Activated CD8-positive, alpha-beta T cell treated with anti-CD3 and anti-CD28 coated beads for 36 hours (primary cell): ENCODE measurements at regions of chr3 and their contacts with region 1.

Region 1: DNA sequence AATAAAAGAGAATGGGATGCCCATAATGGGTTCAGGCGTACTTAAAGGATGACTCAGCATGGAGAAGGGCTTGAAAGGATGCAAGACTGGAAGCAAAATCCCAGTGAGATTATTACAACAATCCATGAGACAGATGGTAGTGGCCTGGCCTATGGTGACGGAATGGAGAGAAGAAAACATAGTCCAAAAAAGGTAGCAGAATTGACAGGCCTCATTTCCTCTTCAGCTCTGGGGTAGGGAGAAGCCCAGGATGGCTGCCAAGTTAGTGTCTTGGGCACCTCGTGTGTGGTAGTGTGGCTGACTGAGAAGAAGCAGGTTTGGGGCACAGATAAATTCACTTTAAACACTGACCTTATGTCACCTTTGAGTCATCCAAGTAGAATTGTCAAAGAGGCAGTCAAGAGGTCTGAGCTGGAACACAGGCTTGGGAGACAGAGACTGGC is 18.1 kb downstream of the MB21D2 start:
- DNase-seq: peak; percentile 30
- ATAC-seq: no peak
- H3K4me3 Mint-ChIP-seq: no peak overlapping the region
- H3K27ac Mint-ChIP-seq: peak overlapping the region; percentile 59
- H3K4me1 Mint-ChIP-seq: peaks cover 32% of the 10 kb centered on the region
- H3K27me3 Mint-ChIP-seq: peaks cover 17% of the 10 kb centered on the region
- CTCF ChIP-seq: no peak

Region 2: GRCh38 chr3:192816351-192816750 is 83.2 kb before region 1 on chr3:
- CTCF ChIA-PET with region 1: interaction called, 3 read pairs
- POLR2A ChIA-PET with region 1: interaction called, 5 read pairs
- intact Hi-C with region 1: loop called (anchors 5 kb)
- DNase-seq: no peak
- ATAC-seq: no peak
- H3K4me3 Mint-ChIP-seq: no peak overlapping the region
- H3K27ac Mint-ChIP-seq: no peak overlapping the region
- H3K4me1 Mint-ChIP-seq: peaks cover 22% of the 10 kb centered on the region
- H3K27me3 Mint-ChIP-seq: no peaks in the 10 kb centered on the region
- CTCF ChIP-seq: peak; percentile 69

Region 3: GRCh38 chr3:192917404-192918274 is 18.1 kb after region 1 on chr3 and contains the start of gene MB21D2:
- CTCF ChIA-PET with region 1: interaction called, 3 read pairs
- POLR2A ChIA-PET with region 1: interaction called, 5 read pairs
- intact Hi-C with region 1: loop called (anchors 2 kb)
- DNase-seq: peak; percentile 62
- ATAC-seq: peak; percentile 70
- H3K4me3 Mint-ChIP-seq: peak within 1 kb of the TSS; percentile 82
- H3K27ac Mint-ChIP-seq: peak within 1 kb of the TSS; percentile 83
- H3K4me1 Mint-ChIP-seq: peaks cover 19% of the 10 kb centered on the region
- H3K27me3 Mint-ChIP-seq: peaks cover 60% of the 10 kb centered on the region
- CTCF ChIP-seq: no peak
- total RNA-seq, gene MB21D2: 3.1 to 3.2 TPM

Region 4: GRCh38 chr3:193048127-193048526 is 148.6 kb after region 1 on chr3:
- CTCF ChIA-PET with region 1: no interaction called
- POLR2A ChIA-PET with region 1: no interaction called
- intact Hi-C with region 1: no loop called
- DNase-seq: no peak
- ATAC-seq: no peak
- H3K4me3 Mint-ChIP-seq: no peak overlapping the region
- H3K27ac Mint-ChIP-seq: no peak overlapping the region
- H3K4me1 Mint-ChIP-seq: no peaks in the 10 kb centered on the region
- H3K27me3 Mint-ChIP-seq: peaks cover 2% of the 10 kb centered on the region
- CTCF ChIP-seq: no peak